Posterior cingulate gyrus (tissue), 11 donors: ENCODE measurements at regions of chr5 and their contacts with region 1.

Region 1: DNA sequence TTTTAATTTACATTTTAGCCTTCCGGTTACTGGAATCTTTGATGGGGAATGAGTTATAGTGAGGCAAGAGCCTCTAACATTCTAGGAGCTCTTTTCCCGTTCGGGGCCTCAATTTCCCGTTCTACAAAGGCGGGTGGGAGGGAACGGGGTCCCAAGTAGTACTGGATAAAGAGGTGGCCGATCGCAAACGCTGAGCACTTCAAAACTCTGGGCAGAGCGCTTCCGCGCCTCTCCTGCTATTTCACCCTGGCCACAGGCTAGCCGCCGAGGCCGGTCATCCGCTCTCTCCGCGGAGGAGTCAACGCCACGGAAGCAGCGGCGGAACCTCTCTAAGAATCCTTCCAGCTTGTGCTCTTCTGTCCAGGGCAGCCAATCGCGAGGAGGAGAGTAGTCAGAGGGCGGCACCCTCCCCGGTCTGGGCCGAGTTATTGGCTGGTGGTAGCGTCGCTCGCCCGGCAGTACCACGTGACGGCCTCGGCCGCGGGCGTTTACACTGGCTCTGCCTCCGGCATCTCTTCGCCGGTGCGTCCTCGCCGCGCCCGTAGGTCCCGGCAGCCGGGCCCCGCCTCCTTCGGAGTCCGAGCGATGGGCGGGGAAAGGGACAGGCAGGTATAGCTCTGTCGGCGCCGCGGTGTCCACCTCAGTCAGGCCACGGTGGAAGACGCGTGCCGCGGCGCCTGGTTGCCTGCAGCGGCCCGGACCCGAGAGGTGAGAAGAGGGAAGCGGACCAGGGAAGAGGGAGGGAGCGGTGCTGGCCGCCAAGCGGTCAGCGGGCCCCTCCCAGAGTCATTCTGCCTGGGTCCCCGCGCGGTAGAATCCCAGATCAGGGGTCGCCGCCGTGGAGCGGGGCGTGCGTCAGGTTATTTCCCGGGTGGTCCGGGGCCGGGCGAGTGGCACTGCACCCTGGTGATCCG is at the start of gene SLC26A2:
- DNase-seq: peak; percentile 96 to 100 (median 98)

Region 2: GRCh38 chr5:149852641-149853330 is 107.7 kb before region 1 on chr5:
- intact Hi-C with region 1: loop called (anchors 5 kb)
- DNase-seq: peak; percentile 41 to 92 (median 72)

Region 3: GRCh38 chr5:150000256-150000989 is 39.9 kb after region 1 on chr5 and contains the starts of genes HMGXB3 and TIGD6:
- intact Hi-C with region 1: loop called (anchors 5 kb)
- DNase-seq: peak; percentile 90 to 99 (median 92)